A549 (cell line): ENCODE measurements at regions of chr19 and their contacts with region 1.

Region 1: DNA sequence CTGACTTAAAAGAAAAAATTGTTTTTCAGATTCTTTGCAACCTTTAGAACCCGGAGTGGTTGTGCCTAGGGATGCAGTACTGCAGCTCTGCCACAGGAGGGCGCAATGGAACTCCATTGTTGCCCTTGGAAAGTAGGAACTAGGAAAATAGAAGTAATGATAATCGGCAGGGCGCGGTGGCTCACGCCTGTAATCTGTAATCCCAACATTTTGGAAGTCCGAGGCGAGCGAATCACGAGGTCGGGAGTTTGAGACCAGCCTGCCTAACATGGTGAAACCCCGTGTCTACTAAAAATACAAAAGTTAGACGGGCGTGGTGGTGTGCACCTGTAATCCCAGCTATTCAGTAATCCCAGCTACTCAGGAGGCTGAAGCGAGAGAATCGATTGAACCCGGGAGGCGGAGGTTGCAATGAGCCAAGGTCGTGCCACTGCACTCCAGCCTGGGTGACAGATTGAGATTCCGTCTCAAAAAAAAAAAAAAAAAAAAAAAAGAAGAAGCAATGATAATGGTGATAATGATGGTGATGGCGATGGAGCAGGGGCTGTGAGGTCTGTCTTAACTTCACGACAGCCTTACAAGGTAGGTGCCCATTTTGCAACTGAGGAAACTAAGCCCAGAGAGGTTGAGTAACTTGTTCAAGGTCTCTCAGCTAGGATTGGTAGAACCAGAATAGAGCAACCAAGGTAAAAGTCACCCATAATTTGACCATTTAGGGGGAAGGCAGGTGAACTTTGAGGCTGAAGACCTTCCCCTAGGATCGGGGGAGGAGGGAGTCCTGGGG is 5.5 kb upstream of the ADAMTS10 start:
- DNase-seq: peak in 1 of 2 experiments; percentile 83
- ATAC-seq: peak in 1 of 2 experiments; percentile 18; a peak in 4 of 6 replicates
- H3K4me3 ChIP-seq: no peak overlapping the region
- H3K27ac ChIP-seq: peak overlapping the region; percentile 78 to 99
- H3K4me1 ChIP-seq: peaks cover 57% of the 10 kb centered on the region
- CTCF ChIP-seq: peak; percentile 68
- EP300 ChIP-seq: no peak
- POLR2A ChIP-seq: no peak
- RAD21 ChIP-seq: peak; percentile 69 to 76

Region 2: DNA sequence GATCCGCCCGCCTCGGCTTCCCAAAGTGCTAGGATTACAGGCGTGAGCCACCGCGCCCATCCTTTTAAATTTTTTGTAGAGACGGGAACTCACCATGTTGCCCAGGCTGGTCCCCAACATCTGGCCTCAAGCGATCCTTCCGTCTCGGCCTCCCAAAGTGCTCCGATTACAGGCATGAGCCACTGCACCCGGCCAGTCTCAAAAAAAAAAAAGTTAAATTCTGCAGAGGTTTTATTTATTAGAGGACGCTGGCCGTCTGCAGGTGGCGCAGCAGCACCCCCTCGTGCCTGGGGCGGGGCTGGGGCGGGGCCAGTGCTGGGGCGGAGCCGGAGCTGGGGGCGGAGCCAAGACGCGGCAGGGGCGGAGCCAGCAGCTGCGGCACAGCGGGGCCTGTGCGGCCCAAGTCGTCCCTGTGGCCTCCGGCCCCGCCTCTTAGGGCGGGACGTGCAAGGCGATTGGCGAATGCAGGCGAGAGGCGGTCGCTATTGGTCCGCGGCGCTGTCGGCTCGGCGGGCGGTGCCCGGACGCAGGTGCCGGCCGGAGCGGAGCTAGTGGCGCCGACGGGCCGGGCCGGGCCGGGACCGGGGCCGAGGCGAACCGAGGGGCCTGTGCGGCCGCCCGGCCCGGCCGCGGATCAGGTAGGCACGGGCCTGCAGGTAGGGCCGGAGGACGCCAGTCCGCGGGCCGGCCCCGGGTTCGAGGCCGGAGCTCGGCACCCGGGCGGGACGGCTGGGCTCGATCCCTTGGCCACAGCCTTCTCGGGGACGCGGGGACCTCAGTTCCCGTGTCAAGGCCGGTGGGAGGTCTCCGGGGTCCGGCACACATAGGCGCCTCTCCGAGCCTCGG is 203.0 kb before region 1 on chr19 and contains the start of gene MARCHF2:
- CTCF ChIA-PET with region 1: no interaction called
- POLR2A ChIA-PET with region 1: no interaction called
- DNase-seq: peak; percentile 66 to 96
- ATAC-seq: peak; percentile 99
- H3K4me3 ChIP-seq: peak within 1 kb of the TSS; percentile 92
- H3K27ac ChIP-seq: peak within 1 kb of the TSS; percentile 89 to 91
- H3K4me1 ChIP-seq: peaks cover 4% of the 10 kb centered on the region; the same call in 1 of the 3 replicates
- CTCF ChIP-seq: peak; percentile 60
- EP300 ChIP-seq: no peak
- POLR2A ChIP-seq: peak; percentile 30; the same call in 1 of the 2 replicates
- RAD21 ChIP-seq: peak; percentile 53 to 66
- polyA plus RNA-seq, gene MARCHF2: 12.4 and 12.8 TPM in 2 replicates

Region 3: DNA sequence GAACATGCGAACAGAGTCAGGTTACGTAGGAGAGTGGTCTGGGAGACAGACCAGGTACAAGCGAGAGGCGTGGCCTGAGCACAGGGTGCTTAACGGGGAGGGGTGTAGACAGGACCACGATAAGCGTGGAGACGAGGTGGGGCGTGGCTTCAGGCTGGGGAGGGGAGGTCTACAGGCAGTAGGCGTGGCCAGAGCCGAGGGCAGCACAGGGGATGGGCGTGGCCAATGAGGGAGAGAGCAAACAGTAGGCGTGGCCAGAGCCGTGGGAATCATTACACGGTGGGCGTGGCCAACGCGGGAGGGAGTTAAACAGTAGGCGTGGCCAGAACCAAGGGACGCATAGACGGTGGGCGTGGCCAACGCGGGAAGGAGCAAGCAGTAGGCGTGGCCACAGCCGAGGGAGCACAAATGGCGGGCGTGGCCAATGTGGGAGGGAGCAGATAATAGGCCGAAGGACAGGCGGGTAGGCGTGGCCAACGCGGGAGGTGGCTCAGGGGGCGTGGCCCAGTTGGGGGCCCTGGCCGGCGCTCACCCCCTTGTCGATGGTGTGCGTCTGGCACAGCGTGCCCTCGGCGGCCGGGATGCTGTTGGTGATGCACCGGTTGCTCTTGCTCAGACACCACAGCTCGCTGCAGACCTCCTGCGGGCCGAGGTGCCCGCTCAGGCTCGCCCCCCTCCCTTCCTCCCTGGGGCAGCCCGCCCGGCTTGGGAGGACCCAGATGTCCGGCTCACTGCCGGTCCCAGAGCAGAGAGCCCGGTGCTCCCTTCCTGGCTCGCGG is 23.6 kb before region 1 on chr19:
- CTCF ChIA-PET with region 1: interaction called, 32 read pairs
- POLR2A ChIA-PET with region 1: interaction called, 6 read pairs
- DNase-seq: peak; percentile 60 to 98
- ATAC-seq: peak; percentile 82 to 93
- H3K4me3 ChIP-seq: peak overlapping the region; percentile 42
- H3K27ac ChIP-seq: peak overlapping the region; percentile 80 to 95
- H3K4me1 ChIP-seq: peaks cover 25% of the 10 kb centered on the region
- CTCF ChIP-seq: no peak
- EP300 ChIP-seq: no peak
- POLR2A ChIP-seq: 0 out of 2 replicates have a peak, but pooled peaks have one; percentile 19
- RAD21 ChIP-seq: no peak

Region 4: DNA sequence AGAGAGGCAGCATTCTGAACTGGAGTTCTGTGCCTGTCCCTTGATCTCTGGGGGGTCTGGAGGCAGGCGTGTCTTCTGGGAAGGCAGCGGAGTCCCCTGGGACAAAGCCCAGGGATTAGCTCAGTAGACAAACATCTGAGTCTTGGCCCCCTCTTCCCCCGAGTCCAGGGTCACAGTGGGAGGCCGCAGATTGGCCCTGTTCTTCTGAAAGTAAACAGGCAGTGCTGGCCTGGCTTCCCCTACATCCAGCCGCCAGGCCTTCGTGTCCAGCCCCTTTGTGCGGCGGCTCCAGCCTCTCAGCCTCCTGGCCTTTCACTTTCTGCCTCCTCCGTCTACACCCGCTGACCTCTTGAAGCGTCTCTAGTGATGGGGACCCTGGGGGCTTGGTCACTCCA is 15.4 kb after region 1 on chr19:
- CTCF ChIA-PET with region 1: interaction called, 19 read pairs
- POLR2A ChIA-PET with region 1: no interaction called
- DNase-seq: peak; percentile 61 to 95
- ATAC-seq: peak; percentile 90 to 94
- H3K4me3 ChIP-seq: no peak overlapping the region
- H3K27ac ChIP-seq: peak overlapping the region; percentile 94 to 98
- H3K4me1 ChIP-seq: peaks cover 57% of the 10 kb centered on the region
- CTCF ChIP-seq: no peak
- EP300 ChIP-seq: peak; percentile 87 to 95; a peak in 3 of 5 replicates
- POLR2A ChIP-seq: no peak
- RAD21 ChIP-seq: peak in 1 of 2 experiments; percentile 19; a peak in 2 of 5 replicates

Region 5: GRCh38 chr19:8641908-8642547 is 26.0 kb after region 1 on chr19:
- CTCF ChIA-PET with region 1: interaction called, 10 read pairs
- POLR2A ChIA-PET with region 1: interaction called, 5 read pairs
- DNase-seq: peak; percentile 38 to 68
- ATAC-seq: no peak
- H3K4me3 ChIP-seq: no peak overlapping the region
- H3K27ac ChIP-seq: peak overlapping the region; percentile 94 to 98
- H3K4me1 ChIP-seq: peaks cover 36% of the 10 kb centered on the region
- CTCF ChIP-seq: 0 out of 3 replicates have a peak, but pooled peaks have one; percentile 14
- EP300 ChIP-seq: no peak
- POLR2A ChIP-seq: no peak
- RAD21 ChIP-seq: peak in 1 of 2 experiments; percentile 58; a peak in 3 of 5 replicates

Region 6: GRCh38 chr19:8697671-8698432 is 81.8 kb after region 1 on chr19:
- CTCF ChIA-PET with region 1: interaction called, 46 read pairs
- POLR2A ChIA-PET with region 1: no interaction called
- DNase-seq: no peak
- ATAC-seq: no peak
- H3K4me3 ChIP-seq: no peak overlapping the region
- H3K27ac ChIP-seq: no peak overlapping the region
- H3K4me1 ChIP-seq: 0 out of 3 replicates have a peak, but pooled peaks cover 2% of the 10 kb centered on the region
- CTCF ChIP-seq: 0 out of 3 replicates have a peak, but pooled peaks have one; percentile 12
- EP300 ChIP-seq: no peak
- POLR2A ChIP-seq: no peak
- RAD21 ChIP-seq: 0 out of 5 replicates have a peak, but pooled peaks of 1 of the 2 experiments have one; percentile 16

Region 7: GRCh38 chr19:8731428-8732169 is 115.6 kb after region 1 on chr19:
- CTCF ChIA-PET with region 1: no interaction called
- POLR2A ChIA-PET with region 1: no interaction called
- DNase-seq: no peak
- ATAC-seq: no peak
- H3K4me3 ChIP-seq: no peak overlapping the region
- H3K27ac ChIP-seq: no peak overlapping the region
- H3K4me1 ChIP-seq: no peaks in the 10 kb centered on the region
- CTCF ChIP-seq: no peak
- EP300 ChIP-seq: no peak
- POLR2A ChIP-seq: no peak
- RAD21 ChIP-seq: no peak